Heart right ventricle (tissue), 16 donors: ENCODE measurements at regions of chrX and their contacts with region 1.

Region 1: GRCh38 chrX:17613979-17614569 is 123.2 kb upstream of the SCML1 start:
- DNase-seq: no peak
- ATAC-seq: no peak
- H3K4me3 ChIP-seq: no peak overlapping the region
- H3K27ac ChIP-seq: no peak overlapping the region
- H3K4me1 ChIP-seq: no peaks in the 10 kb centered on the region
- H3K27me3 ChIP-seq: peaks cover 0 to 18% (median 0%) of the 10 kb centered on the region in 7 donors
- CTCF ChIP-seq: no peak

Region 2: GRCh38 chrX:17632942-17633341 is 18.9 kb after region 1 on chrX:
- intact Hi-C with region 1: loop called in 1 of 10 experiments (anchors 1 kb)
- DNase-seq: no peak
- ATAC-seq: no peak
- H3K4me3 ChIP-seq: peak overlapping the region in 1 of 10 donors; percentile 5
- H3K27ac ChIP-seq: peak overlapping the region in 1 of 10 donors; percentile 55
- H3K4me1 ChIP-seq: peaks cover 0 to 8% (median 0%) of the 10 kb centered on the region in 9 donors
- H3K27me3 ChIP-seq: peaks cover 0 to 27% (median 0%) of the 10 kb centered on the region in 7 donors
- CTCF ChIP-seq: no peak